Psoas muscle (tissue), 8 donors: ENCODE measurements at regions of chr2 and their contacts with region 1.

Region 1: GRCh38 chr2:15636972-15637785 is 45.5 kb downstream of the DDX1 start:
- DNase-seq: peak; percentile 66 to 78
- ATAC-seq: peak; percentile 71 to 96 (median 85)
- H3K4me3 ChIP-seq: no peak overlapping the region
- H3K27ac ChIP-seq: no peak overlapping the region
- H3K4me1 ChIP-seq: peaks cover 11% of the 10 kb centered on the region
- H3K27me3 ChIP-seq: no peaks in the 10 kb centered on the region
- CTCF ChIP-seq: peak; percentile 90

Region 2: GRCh38 chr2:15591692-15592463 is 45.3 kb before region 1 on chr2 and contains the start of gene DDX1:
- intact Hi-C with region 1: loop called in 1 of 2 experiments (anchors 5 kb)
- DNase-seq: peak; percentile 83 to 91
- ATAC-seq: peak; percentile 95 to 98 (median 96)
- H3K4me3 ChIP-seq: peak within 1 kb of the TSS; percentile 92
- H3K27ac ChIP-seq: peak within 1 kb of the TSS; percentile 94
- H3K4me1 ChIP-seq: peaks cover 28% of the 10 kb centered on the region
- H3K27me3 ChIP-seq: no peaks in the 10 kb centered on the region
- CTCF ChIP-seq: no peak
- total RNA-seq, gene DDX1: 116 to 143 (median 132) TPM

Region 3: DNA sequence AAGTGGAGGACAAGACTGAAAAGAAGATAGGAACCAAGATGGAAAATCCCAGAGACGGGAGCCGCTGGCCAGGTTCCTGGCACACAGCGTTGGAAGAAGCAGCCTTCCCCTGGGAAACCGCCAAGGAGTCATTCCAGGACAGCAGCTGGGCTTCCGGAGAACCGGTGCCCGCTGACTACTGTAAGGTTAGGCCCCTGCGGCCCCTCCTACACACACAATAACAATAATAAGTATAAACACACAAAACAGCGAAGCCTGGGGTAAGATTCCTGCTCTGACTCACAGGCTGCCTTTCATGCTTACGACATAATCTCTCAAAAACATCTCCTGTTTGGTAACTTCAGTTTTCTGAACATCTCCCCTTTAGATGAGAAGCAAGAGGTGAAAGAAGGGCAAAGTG is 275.0 kb after region 1 on chr2:
- intact Hi-C with region 1: loop called in 1 of 2 experiments (anchors 10 kb)
- DNase-seq: peak; percentile 56 to 84
- ATAC-seq: peak; percentile 74 to 87 (median 84)
- H3K4me3 ChIP-seq: no peak overlapping the region
- H3K27ac ChIP-seq: no peak overlapping the region
- H3K4me1 ChIP-seq: peaks cover 30% of the 10 kb centered on the region
- H3K27me3 ChIP-seq: no peaks in the 10 kb centered on the region
- CTCF ChIP-seq: no peak

Region 4: GRCh38 chr2:15939854-15940660 is 302.9 kb after region 1 on chr2 and contains the start of gene MYCN:
- intact Hi-C with region 1: loop called (anchors 5 to 10 kb)
- DNase-seq: peak in 1 of 2 donors; percentile 58
- ATAC-seq: peak; percentile 27 to 62 (median 40)
- H3K4me3 ChIP-seq: peak within 1 kb of the TSS; percentile 63
- H3K27ac ChIP-seq: no peak within 1 kb of the TSS
- H3K4me1 ChIP-seq: peaks cover 29% of the 10 kb centered on the region
- H3K27me3 ChIP-seq: peaks cover 0 to 38% (median 11%) of the 10 kb centered on the region in 3 donors
- CTCF ChIP-seq: no peak
- total RNA-seq, gene MYCN: 0.25 to 0.36 (median 0.30) TPM

Region 5: DNA sequence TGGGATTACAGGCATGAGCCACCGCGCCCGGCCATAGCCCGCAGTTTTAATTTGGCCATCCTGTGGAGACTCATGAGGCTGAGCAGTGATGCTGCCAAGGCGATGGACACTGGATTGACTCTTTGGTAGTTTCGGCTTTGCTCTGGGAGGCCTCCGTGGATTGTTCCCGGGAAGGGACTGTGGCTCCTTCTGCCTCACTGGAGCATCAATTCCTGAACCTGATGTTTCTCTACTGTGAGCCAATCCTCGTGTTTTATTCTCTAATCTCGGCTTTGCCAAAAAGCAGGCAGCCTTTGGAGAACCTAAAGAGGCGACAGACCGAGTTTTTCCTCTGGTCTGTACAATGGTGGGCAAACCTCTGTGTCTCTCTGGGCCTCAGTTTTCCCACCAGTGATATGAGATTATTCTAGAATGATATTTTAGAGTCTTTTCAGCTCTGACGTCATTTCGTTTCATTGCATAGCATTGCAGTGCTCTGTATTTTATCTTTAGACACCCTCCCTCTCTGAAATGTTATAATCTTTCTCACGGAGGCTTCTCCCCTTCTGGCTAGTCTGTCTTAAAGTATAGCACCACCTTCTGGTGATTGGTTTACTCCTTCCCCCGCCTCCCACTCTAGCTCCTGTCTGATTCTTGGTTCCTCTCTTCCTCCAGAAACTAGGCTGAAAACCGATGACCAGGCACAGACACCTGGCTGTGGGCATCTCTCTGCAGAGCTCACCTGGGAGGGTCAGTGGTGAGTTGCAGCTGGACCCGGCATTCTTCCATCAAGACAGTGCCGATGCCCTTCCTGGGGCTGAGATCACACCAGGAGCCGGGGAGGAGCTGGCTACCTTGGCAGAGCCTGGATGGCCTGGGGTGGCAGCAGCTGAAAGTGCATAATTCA is 644.5 kb after region 1 on chr2:
- intact Hi-C with region 1: loop called (anchors 2 to 5 kb)
- DNase-seq: no peak
- ATAC-seq: peak in 3 of 4 donors; percentile 57 to 74 (median 65)
- H3K4me3 ChIP-seq: no peak overlapping the region
- H3K27ac ChIP-seq: no peak overlapping the region
- H3K4me1 ChIP-seq: no peaks in the 10 kb centered on the region
- H3K27me3 ChIP-seq: no peaks in the 10 kb centered on the region
- CTCF ChIP-seq: peak; percentile 48

Region 6: GRCh38 chr2:16507655-16508489 is 870.7 kb after region 1 on chr2:
- intact Hi-C with region 1: loop called (anchors 2 to 5 kb)
- DNase-seq: peak; percentile 41 to 71
- ATAC-seq: peak; percentile 92 to 98 (median 96)
- H3K4me3 ChIP-seq: peak overlapping the region; percentile 65
- H3K27ac ChIP-seq: no peak overlapping the region
- H3K4me1 ChIP-seq: peaks cover 8% of the 10 kb centered on the region
- H3K27me3 ChIP-seq: peaks cover 0 to 34% (median 0%) of the 10 kb centered on the region in 3 donors
- CTCF ChIP-seq: peak; percentile 71

Region 7: GRCh38 chr2:16608661-16609643 is 971.8 kb after region 1 on chr2:
- intact Hi-C with region 1: loop called in 1 of 2 experiments (anchors 10 kb)
- DNase-seq: peak; percentile 81 to 90
- ATAC-seq: peak; percentile 89 to 94 (median 92)
- H3K4me3 ChIP-seq: peak overlapping the region; percentile 44
- H3K27ac ChIP-seq: peak overlapping the region; percentile 1
- H3K4me1 ChIP-seq: peaks cover 6% of the 10 kb centered on the region
- H3K27me3 ChIP-seq: no peaks in the 10 kb centered on the region
- CTCF ChIP-seq: peak; percentile 99